ENCODE measurements at regions of chr15 and their contacts with region 1.

Region 1: DNA sequence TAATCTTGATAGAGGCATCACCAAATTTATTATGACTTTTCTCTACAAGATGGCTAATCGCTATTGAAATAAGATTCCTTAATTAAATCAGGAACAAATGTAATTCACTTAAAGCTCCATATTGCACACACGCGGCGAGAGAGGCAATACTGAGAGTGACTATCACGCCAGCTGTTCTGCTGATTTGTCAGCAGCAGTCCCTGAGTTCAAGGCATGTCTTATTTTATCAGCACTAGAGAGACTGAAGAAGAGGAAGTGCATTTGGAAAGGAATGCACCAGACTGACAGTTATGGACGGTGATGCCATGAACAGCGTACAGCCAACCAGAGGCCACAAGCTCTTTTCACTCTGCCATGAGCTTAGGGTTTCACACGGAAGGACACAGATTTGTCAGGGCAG is 83.6 kb upstream of the SLCO3A1 start:
- DNase-seq: no peak
- ATAC-seq: no peak; a peak in 1 of 6 replicates
- H3K4me3 ChIP-seq: no peak overlapping the region
- H3K27ac ChIP-seq: no peak overlapping the region
- H3K4me1 ChIP-seq: no peaks in the 10 kb centered on the region
- CTCF ChIP-seq: no peak
- EP300 ChIP-seq: no peak
- POLR2A ChIP-seq: no peak
- RAD21 ChIP-seq: no peak

Region 2: DNA sequence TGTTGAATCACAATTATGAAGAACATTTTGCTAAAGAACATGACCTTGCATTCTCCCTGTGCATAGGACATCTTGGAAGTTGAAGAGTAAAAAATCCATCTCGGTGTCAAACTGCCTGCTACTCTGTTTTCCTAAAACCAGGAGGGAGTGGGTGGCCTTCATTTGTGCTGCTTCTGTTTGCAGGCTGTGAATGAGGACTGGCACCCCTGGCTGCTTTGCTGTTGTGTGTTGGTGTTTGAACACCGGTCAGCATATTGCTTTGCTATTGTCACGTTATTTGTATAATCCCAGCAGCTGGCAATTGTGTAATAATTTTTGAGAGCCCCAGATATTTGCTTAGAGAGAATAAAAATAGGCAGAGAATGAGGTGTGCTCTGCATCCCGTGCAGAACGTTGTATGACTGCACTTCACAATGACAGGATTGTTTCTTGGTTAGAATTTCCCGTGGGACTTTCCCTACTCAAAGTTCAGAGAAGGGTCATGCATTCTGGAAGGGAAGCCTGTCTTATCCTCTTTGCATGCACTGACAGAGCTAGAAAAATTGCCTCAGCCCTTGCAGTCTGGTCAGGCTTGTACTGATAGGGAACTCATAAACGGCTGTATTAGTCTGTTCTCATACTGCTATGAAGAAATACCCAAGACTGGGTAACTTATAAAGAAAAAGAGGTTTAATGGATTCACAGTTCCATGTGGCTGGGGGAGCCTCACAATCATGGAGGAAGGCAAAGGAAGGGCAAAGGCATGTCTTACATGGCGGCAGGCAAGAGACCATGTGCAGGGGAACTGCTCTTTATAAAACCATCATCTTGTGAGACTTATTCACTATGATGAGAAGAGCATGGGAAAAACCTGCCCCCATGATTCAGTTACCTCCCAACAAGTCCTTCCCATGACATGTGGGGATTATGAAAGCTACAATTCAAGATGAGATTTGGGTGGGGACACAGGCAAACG is 653.5 kb before region 1 on chr15:
- CTCF ChIA-PET with region 1: no interaction called
- POLR2A ChIA-PET with region 1: no interaction called
- DNase-seq: no peak
- ATAC-seq: no peak
- H3K4me3 ChIP-seq: no peak overlapping the region
- H3K27ac ChIP-seq: no peak overlapping the region
- H3K4me1 ChIP-seq: no peaks in the 10 kb centered on the region
- CTCF ChIP-seq: no peak
- EP300 ChIP-seq: no peak
- POLR2A ChIP-seq: no peak
- RAD21 ChIP-seq: no peak

Region 3: GRCh38 chr15:91782221-91782620 is 12.3 kb after region 1 on chr15:
- CTCF ChIA-PET with region 1: interaction called, 11 read pairs
- POLR2A ChIA-PET with region 1: no interaction called
- DNase-seq: no peak
- ATAC-seq: no peak
- H3K4me3 ChIP-seq: no peak overlapping the region
- H3K27ac ChIP-seq: no peak overlapping the region
- H3K4me1 ChIP-seq: no peaks in the 10 kb centered on the region
- CTCF ChIP-seq: no peak
- EP300 ChIP-seq: no peak
- POLR2A ChIP-seq: no peak
- RAD21 ChIP-seq: no peak